ENCODE measurements at regions of chr10 and their contacts with region 1.

Region 1: GRCh38 chr10:111063471-111063870 is 13.4 kb upstream of the ADRA2A start:
- DNase-seq: no peak
- H3K4me3 ChIP-seq: no peak overlapping the region
- H3K27me3 ChIP-seq: no peaks in the 10 kb centered on the region
- CTCF ChIP-seq: no peak

Region 2: DNA sequence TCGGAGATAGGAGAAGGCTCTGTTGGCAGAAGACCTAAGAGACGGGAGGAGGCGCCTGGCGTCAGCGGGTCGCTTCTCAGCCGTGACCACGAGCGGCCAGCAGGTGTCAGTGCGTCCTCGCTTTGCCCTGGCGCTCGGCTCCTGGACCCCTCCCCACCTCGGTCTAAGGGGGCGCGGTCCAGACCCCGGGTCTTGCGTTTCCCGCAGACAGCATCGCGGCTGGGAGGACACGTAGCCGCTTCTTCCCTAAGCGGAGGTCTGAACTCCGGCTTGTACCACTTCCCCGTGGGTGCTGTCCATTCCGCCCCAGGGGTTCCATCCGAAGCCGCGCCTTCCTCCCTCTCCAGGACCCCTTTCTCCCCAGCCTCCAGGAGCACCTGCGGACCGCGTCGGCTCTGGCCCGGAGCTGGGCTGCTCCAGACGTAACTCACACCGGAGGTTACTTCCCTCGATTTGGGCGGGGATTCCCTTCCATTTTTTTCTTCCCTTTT is 12.8 kb after region 1 on chr10:
- CTCF ChIA-PET with region 1: interaction called, 20 read pairs
- POLR2A ChIA-PET with region 1: no interaction called
- DNase-seq: no peak
- H3K4me3 ChIP-seq: peak overlapping the region; percentile 20
- H3K27me3 ChIP-seq: peaks cover 39% of the 10 kb centered on the region
- CTCF ChIP-seq: peak; percentile 87

Region 3: GRCh38 chr10:111634191-111634590 is 570.7 kb after region 1 on chr10:
- CTCF ChIA-PET with region 1: no interaction called
- POLR2A ChIA-PET with region 1: no interaction called
- DNase-seq: no peak
- H3K4me3 ChIP-seq: no peak overlapping the region
- H3K27me3 ChIP-seq: no peaks in the 10 kb centered on the region
- CTCF ChIP-seq: no peak